Spleen (tissue), 13 donors: ENCODE measurements at regions of chr6 and their contacts with region 1.

Region 1: GRCh38 chr6:36196880-36197548 is 470 bp downstream of the BRPF3 start:
- DNase-seq: peak; percentile 100
- H3K4me3 ChIP-seq: peak overlapping the region; percentile 49 to 86 (median 62)
- H3K27ac ChIP-seq: peak overlapping the region; percentile 91 to 99 (median 96)
- H3K4me1 ChIP-seq: peaks cover 11 to 53% (median 37%) of the 10 kb centered on the region in 6 donors
- H3K27me3 ChIP-seq: no peaks in the 10 kb centered on the region
- CTCF ChIP-seq: peak in 1 of 11 experiments; percentile 32
- POLR2A ChIP-seq: no peak

Region 2: DNA sequence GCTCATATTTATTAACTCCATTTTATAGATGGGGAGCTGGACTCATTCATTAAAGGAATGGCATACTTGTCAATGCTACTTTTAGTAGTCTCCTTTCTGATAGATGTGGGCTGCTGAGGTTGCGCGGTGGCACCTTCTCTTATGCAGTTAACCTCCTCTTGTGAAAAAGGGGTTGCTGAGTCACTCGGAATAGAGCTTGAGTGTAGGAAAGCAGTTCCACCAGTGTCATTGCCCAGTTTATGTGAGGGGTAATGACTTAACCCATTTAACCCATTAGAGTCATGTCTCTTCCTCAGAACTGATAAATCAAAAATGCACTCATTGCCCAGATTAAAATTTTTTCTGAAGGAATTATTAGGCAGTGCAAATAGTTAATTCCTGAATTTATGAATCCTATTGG is 163.1 kb before region 1 on chr6:
- intact Hi-C with region 1: loop called (anchors 5 kb)
- DNase-seq: no peak
- H3K4me3 ChIP-seq: peak overlapping the region in 2 of 8 donors; percentile 0 to 11
- H3K27ac ChIP-seq: peak overlapping the region in 5 of 8 donors; percentile 93 to 99 (median 96)
- H3K4me1 ChIP-seq: peaks cover 38 to 100% (median 96%) of the 10 kb centered on the region in 6 donors
- H3K27me3 ChIP-seq: no peaks in the 10 kb centered on the region
- CTCF ChIP-seq: no peak
- POLR2A ChIP-seq: no peak

Region 3: DNA sequence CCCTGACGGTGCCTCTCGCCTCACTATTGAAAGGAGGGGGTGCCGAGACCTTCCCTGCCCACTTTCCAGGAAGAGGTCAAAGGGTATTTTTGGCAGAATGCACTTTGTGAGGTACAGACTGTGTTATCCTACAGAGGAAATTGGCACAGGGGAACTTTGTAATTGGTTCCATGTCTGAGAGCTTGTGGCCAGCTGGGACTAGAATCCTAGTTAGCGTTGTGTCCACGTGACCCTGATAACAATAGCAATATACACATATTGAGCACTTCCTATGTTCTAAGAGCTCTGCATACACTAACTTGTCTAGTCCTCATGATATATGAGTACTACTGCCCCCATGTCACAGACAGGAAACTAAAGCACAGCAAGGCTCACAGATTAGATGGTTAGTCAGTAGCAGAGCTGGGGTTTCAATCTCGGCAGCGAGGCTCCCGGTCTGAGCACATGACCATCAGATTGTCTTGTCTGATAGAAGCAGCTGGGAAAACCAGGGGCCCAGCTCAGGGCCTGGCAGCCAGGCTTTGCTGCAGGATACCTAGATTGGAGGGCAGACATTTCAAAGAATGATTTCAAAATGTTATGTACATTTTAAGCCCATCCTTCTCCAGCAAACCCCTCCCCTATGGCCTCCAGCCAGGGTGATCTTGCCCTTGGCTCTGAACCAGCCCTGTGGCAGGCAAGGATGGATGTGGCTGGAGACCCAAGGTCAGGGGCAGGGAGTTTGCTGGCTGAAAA is 65.3 kb before region 1 on chr6:
- intact Hi-C with region 1: loop called (anchors 5 kb)
- DNase-seq: peak; percentile 86
- H3K4me3 ChIP-seq: peak overlapping the region in 7 of 8 donors; percentile 29 to 75 (median 47)
- H3K27ac ChIP-seq: peak overlapping the region; percentile 55 to 94 (median 86)
- H3K4me1 ChIP-seq: peaks cover 23 to 87% (median 49%) of the 10 kb centered on the region in 6 donors
- H3K27me3 ChIP-seq: no peaks in the 10 kb centered on the region
- CTCF ChIP-seq: no peak
- POLR2A ChIP-seq: no peak